ENCODE measurements at regions of chr12 and their contacts with region 1.

Region 1: GRCh38 chr12:47904713-47905310 is at the start of gene VDR:
- DNase-seq: peak; percentile 39 to 78 (median 61)
- ATAC-seq: peak; percentile 75
- H3K4me3 ChIP-seq: peak within 1 kb of the TSS; percentile 68 to 70
- H3K4me3 Mint-ChIP-seq: peak within 1 kb of the TSS; percentile 86
- H3K27ac ChIP-seq: no peak within 1 kb of the TSS
- H3K27ac Mint-ChIP-seq: peak within 1 kb of the TSS; percentile 56
- H3K4me1 ChIP-seq: peaks cover 43% of the 10 kb centered on the region
- H3K4me1 Mint-ChIP-seq: peaks cover 43% of the 10 kb centered on the region
- H3K27me3 ChIP-seq: peaks cover 0 to 4% of the 10 kb centered on the region in 2 experiments
- H3K27me3 Mint-ChIP-seq: peaks cover 2% of the 10 kb centered on the region
- CTCF ChIP-seq: no peak
- total RNA-seq, gene VDR: 0.90 to 0.92 TPM

Region 2: GRCh38 chr12:47882781-47883546 is 21.8 kb before region 1 on chr12:
- CTCF ChIA-PET with region 1: interaction called, 10 read pairs
- POLR2A ChIA-PET with region 1: interaction called, 3 read pairs
- intact Hi-C with region 1: no loop called
- DNase-seq: peak in 4 of 9 experiments; percentile 7 to 66 (median 34)
- ATAC-seq: peak; percentile 81
- H3K4me3 ChIP-seq: peak overlapping the region; percentile 28 to 52
- H3K4me3 Mint-ChIP-seq: peak overlapping the region; percentile 86
- H3K27ac ChIP-seq: no peak overlapping the region
- H3K27ac Mint-ChIP-seq: peak overlapping the region; percentile 69
- H3K4me1 ChIP-seq: peaks cover 36% of the 10 kb centered on the region
- H3K4me1 Mint-ChIP-seq: peaks cover 44% of the 10 kb centered on the region
- H3K27me3 ChIP-seq: peaks cover 0 to 2% of the 10 kb centered on the region in 2 experiments
- H3K27me3 Mint-ChIP-seq: no peaks in the 10 kb centered on the region
- CTCF ChIP-seq: no peak

Region 3: GRCh38 chr12:47916546-47916945 is 11.7 kb after region 1 on chr12:
- CTCF ChIA-PET with region 1: interaction called, 13 read pairs
- POLR2A ChIA-PET with region 1: no interaction called
- intact Hi-C with region 1: no loop called
- DNase-seq: no peak
- ATAC-seq: no peak
- H3K4me3 ChIP-seq: no peak overlapping the region
- H3K4me3 Mint-ChIP-seq: no peak overlapping the region
- H3K27ac ChIP-seq: no peak overlapping the region
- H3K27ac Mint-ChIP-seq: no peak overlapping the region
- H3K4me1 ChIP-seq: no peaks in the 10 kb centered on the region
- H3K4me1 Mint-ChIP-seq: no peaks in the 10 kb centered on the region
- H3K27me3 ChIP-seq: no peaks in the 10 kb centered on the region
- H3K27me3 Mint-ChIP-seq: peaks cover 4% of the 10 kb centered on the region
- CTCF ChIP-seq: no peak

Region 4: GRCh38 chr12:47963340-47964040 is 58.7 kb after region 1 on chr12 and contains the start of gene TMEM106C:
- CTCF ChIA-PET with region 1: interaction called, 3 read pairs
- POLR2A ChIA-PET with region 1: no interaction called
- intact Hi-C with region 1: loop called in 1 of 2 experiments (anchors 1 kb)
- DNase-seq: peak; percentile 82 to 96 (median 90)
- ATAC-seq: peak; percentile 98
- H3K4me3 ChIP-seq: peak within 1 kb of the TSS; percentile 67 to 76
- H3K4me3 Mint-ChIP-seq: peak within 1 kb of the TSS; percentile 97
- H3K27ac ChIP-seq: peak within 1 kb of the TSS in 1 of 2 experiments; percentile 43
- H3K27ac Mint-ChIP-seq: peak within 1 kb of the TSS; percentile 83
- H3K4me1 ChIP-seq: peaks cover 13% of the 10 kb centered on the region
- H3K4me1 Mint-ChIP-seq: peaks cover 25% of the 10 kb centered on the region
- H3K27me3 ChIP-seq: no peaks in the 10 kb centered on the region
- H3K27me3 Mint-ChIP-seq: peaks cover 11% of the 10 kb centered on the region
- CTCF ChIP-seq: peak; percentile 93
- total RNA-seq, gene TMEM106C: 12.1 to 13.1 TPM

Region 5: GRCh38 chr12:49673446-49674317 is 1768.9 kb after region 1 on chr12:
- CTCF ChIA-PET with region 1: no interaction called
- POLR2A ChIA-PET with region 1: no interaction called
- intact Hi-C with region 1: loop called in 1 of 2 experiments (anchors 5 kb)
- DNase-seq: peak in 3 of 9 experiments; percentile 18 to 30 (median 26)
- ATAC-seq: no peak
- H3K4me3 ChIP-seq: no peak overlapping the region
- H3K4me3 Mint-ChIP-seq: peak overlapping the region; percentile 26
- H3K27ac ChIP-seq: peak overlapping the region in 1 of 2 experiments; percentile 92
- H3K27ac Mint-ChIP-seq: peak overlapping the region; percentile 98
- H3K4me1 ChIP-seq: peaks cover 66% of the 10 kb centered on the region
- H3K4me1 Mint-ChIP-seq: peaks cover 84% of the 10 kb centered on the region
- H3K27me3 ChIP-seq: no peaks in the 10 kb centered on the region
- H3K27me3 Mint-ChIP-seq: no peaks in the 10 kb centered on the region
- CTCF ChIP-seq: no peak

Measured in CD8-positive, alpha-beta T cell (primary cell).